ENCODE measurements at regions of chr2 and their contacts with region 1.

Region 1: DNA sequence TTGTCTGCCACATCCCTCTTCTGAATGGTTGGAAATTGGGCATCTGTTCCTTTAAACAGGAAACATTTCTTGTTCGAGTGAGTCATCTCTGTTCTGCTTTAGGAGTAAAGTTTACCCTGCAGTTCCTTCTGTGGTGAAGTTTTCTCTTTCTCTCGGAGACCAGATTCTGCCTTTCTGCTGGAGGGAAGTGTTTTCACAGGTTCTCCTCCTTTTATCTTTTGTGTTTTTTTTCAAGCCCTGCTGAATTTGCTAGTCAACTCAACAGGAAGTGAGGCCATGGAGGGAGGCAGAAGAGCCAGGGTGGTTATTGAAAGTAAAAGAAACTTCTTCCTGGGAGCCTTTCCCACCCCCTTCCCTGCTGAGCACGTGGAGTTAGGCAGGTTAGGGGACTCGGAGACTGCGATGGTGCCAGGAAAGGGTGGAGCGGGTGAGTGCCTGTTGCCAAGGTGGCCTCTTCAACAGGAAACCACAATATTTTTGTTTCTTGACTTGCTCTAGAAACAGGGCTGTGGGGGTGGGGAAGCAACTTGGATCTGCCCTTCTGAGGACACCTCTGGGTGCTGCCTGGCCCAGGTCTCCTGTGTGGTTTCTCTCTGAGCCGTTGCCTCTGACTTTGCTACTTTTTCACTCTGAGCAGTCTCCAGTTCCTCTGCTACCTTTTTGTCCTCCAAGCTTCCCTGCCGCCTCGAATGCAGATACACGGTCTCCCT is 2.2 kb upstream of the CASP8 start:
- DNase-seq: peak; percentile 68
- ATAC-seq: peak; percentile 61
- H3K4me3 Mint-ChIP-seq: peak overlapping the region; percentile 90
- H3K27ac Mint-ChIP-seq: peak overlapping the region; percentile 98
- H3K4me1 Mint-ChIP-seq: peaks cover 83% of the 10 kb centered on the region
- H3K27me3 Mint-ChIP-seq: no peaks in the 10 kb centered on the region
- CTCF ChIP-seq: no peak

Region 2: DNA sequence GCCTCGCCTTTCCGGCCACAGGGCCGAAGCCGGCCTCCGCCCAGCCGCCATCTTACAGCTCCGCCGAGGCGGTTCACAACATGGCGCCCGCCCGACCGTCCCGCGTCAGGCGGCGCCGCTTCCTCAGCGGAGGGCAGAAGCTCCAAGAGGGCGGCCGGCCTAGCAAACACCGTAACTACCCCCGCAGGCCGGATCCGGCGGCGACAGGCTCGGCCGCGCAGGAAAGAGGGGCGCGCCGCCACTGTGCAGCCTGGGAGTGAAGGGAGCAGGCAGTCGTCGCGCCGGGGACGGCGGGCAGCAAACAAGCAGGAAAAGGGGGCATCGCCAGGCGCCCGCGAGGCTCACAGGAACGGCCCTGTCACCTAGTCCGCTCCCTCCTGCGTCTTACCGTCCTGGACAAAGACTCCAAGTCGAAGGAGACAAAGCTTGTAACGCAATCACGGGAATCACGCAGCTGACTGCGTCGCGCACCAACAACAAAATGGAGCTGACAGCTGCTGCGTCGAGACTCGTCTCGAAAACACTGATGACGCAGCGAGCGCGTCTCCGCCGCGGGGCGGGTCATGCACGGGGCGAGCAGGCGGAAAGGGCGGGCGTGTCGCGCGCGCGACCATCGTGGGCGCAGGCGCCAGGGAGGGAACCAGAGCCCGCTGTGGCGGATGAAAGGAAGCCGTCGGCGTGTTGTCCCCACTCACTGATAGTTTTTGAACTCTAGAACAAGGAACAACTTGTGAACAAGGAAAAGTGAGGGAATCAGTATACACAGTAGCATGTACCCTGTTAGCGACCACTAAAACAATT is 393.7 kb before region 1 on chr2 and contains the start of gene CLK1:
- CTCF ChIA-PET with region 1: no interaction called
- POLR2A ChIA-PET with region 1: interaction called, 13 read pairs
- intact Hi-C with region 1: loop called (anchors 1 kb)
- DNase-seq: peak; percentile 90
- ATAC-seq: peak; percentile 82
- H3K4me3 Mint-ChIP-seq: peak within 1 kb of the TSS; percentile 100
- H3K27ac Mint-ChIP-seq: peak within 1 kb of the TSS; percentile 100
- H3K4me1 Mint-ChIP-seq: peaks cover 41% of the 10 kb centered on the region
- H3K27me3 Mint-ChIP-seq: no peaks in the 10 kb centered on the region
- CTCF ChIP-seq: no peak
- total RNA-seq, gene CLK1: 173 and 203 TPM in 2 replicates

Region 3: GRCh38 chr2:201208563-201209252 is 49.4 kb before region 1 on chr2:
- CTCF ChIA-PET with region 1: no interaction called
- POLR2A ChIA-PET with region 1: no interaction called
- intact Hi-C with region 1: loop called (anchors 1 kb)
- DNase-seq: peak; percentile 40
- ATAC-seq: peak; percentile 83
- H3K4me3 Mint-ChIP-seq: peak overlapping the region; percentile 53
- H3K27ac Mint-ChIP-seq: peak overlapping the region; percentile 89
- H3K4me1 Mint-ChIP-seq: peaks cover 43% of the 10 kb centered on the region
- H3K27me3 Mint-ChIP-seq: no peaks in the 10 kb centered on the region
- CTCF ChIP-seq: no peak

Region 4: GRCh38 chr2:201242571-201243277 is 15.4 kb before region 1 on chr2:
- CTCF ChIA-PET with region 1: interaction called, 30 read pairs
- POLR2A ChIA-PET with region 1: interaction called, 19 read pairs
- intact Hi-C with region 1: loop called (anchors 2 kb)
- DNase-seq: no peak
- ATAC-seq: no peak
- H3K4me3 Mint-ChIP-seq: no peak overlapping the region
- H3K27ac Mint-ChIP-seq: peak overlapping the region; percentile 54
- H3K4me1 Mint-ChIP-seq: peaks cover 74% of the 10 kb centered on the region
- H3K27me3 Mint-ChIP-seq: no peaks in the 10 kb centered on the region
- CTCF ChIP-seq: no peak

Region 5: GRCh38 chr2:201363857-201364560 is 105.9 kb after region 1 on chr2:
- CTCF ChIA-PET with region 1: interaction called, 6 read pairs
- POLR2A ChIA-PET with region 1: interaction called, 3 read pairs
- intact Hi-C with region 1: loop called (anchors 1 kb)
- DNase-seq: no peak
- ATAC-seq: peak; percentile 97
- H3K4me3 Mint-ChIP-seq: no peak overlapping the region
- H3K27ac Mint-ChIP-seq: peak overlapping the region; percentile 56
- H3K4me1 Mint-ChIP-seq: peaks cover 5% of the 10 kb centered on the region
- H3K27me3 Mint-ChIP-seq: no peaks in the 10 kb centered on the region
- CTCF ChIP-seq: peak; percentile 93

Region 6: GRCh38 chr2:201411421-201411820 is 153.3 kb after region 1 on chr2:
- CTCF ChIA-PET with region 1: no interaction called
- POLR2A ChIA-PET with region 1: no interaction called
- intact Hi-C with region 1: no loop called
- DNase-seq: no peak
- ATAC-seq: no peak
- H3K4me3 Mint-ChIP-seq: no peak overlapping the region
- H3K27ac Mint-ChIP-seq: peak overlapping the region; percentile 57
- H3K4me1 Mint-ChIP-seq: peaks cover 22% of the 10 kb centered on the region
- H3K27me3 Mint-ChIP-seq: no peaks in the 10 kb centered on the region
- CTCF ChIP-seq: no peak